BJ (cell line): ENCODE measurements at regions of chr1 and their contacts with region 1.

Region 1: DNA sequence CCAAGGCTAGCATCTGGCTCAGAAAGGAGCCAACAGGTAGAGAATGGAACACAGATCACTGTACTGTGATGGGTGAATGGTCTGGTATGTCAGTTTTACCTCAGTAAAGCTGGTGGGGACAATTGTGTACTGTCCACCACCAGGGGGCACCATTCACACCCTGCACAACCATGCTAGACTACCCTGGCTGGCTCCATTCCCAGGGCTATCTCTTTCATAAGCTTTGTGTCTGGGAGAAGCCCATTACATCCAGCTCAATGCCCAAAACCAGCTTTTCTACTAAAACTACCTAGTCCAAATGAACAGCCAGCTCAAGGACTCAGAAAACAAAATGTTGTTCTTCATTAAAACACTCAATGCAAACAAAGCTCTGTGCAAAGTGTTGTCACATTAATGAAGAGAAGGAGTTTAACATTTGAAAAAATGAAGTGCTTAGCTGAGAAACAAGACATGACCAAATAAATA is 62.0 kb upstream of the RASAL2 start:
- DNase-seq: peak; percentile 41
- H3K4me3 ChIP-seq: no peak overlapping the region
- H3K27me3 ChIP-seq: no peaks in the 10 kb centered on the region
- CTCF ChIP-seq: peak; percentile 87

Region 2: DNA sequence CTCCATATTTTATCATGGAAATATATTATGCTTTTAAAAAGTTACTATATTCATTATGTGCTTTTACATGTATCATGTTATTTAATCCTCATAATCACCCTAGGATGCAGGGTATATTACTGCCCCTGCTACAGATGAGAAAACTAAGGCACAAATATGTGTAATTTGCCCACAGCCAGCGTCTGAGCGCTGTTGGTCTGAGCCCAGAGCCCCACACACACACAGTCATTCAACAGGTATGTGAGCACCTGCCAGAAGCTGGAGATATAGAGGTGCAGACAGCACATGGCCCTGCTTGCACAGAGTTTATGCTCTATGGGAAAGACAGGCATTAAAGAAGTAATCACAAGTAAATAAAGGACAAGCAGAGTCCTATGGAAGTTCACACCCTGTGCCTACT is 12.3 kb before region 1 on chr1:
- CTCF ChIA-PET with region 1: interaction called, 11 read pairs
- POLR2A ChIA-PET with region 1: no interaction called
- DNase-seq: no peak
- H3K4me3 ChIP-seq: no peak overlapping the region
- H3K27me3 ChIP-seq: no peaks in the 10 kb centered on the region
- CTCF ChIP-seq: no peak

Region 3: DNA sequence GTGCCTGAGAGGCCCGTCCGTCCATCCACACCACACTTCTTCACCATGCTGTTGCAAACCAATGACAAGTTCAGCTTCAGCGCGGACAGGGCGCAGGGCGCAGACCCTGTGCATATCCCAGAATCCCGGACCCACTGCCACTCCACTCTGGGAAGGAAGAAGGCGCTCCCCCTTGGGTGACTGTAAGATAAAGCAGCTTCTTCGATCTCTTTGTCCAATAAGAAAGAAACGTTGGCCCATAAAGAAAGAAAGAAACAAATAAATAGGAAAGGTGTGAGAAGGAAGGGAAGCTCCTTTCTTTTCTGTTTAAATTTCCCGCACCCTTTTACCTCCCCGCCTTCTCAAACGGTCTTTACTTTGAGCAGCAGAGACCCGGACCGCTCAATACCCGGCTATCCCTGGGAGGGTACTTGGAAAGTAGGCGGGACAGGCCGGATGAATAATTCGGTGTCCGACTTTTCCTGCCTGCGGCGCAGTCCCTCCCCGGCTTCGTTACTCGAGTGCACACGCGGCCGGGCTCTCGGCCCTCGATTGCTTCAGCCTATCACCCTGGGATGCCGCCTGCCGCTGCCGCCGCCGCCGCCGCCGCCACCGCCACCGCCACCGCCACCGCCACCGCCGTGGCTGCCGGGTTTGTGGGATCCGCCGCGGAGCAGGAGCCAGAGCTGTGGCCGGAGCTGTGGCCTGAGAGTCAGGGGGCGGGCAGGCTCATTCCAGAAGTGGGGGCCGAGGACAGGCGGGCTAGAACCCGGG is 61.5 kb after region 1 on chr1:
- CTCF ChIA-PET with region 1: interaction called, 11 read pairs
- POLR2A ChIA-PET with region 1: no interaction called
- DNase-seq: peak; percentile 83
- H3K4me3 ChIP-seq: peak overlapping the region; percentile 98
- H3K27me3 ChIP-seq: no peaks in the 10 kb centered on the region
- CTCF ChIP-seq: no peak; the same call in 1 of the 2 replicates

Region 4: GRCh38 chr1:178273707-178274410 is 242.0 kb after region 1 on chr1:
- CTCF ChIA-PET with region 1: interaction called, 10 read pairs
- POLR2A ChIA-PET with region 1: no interaction called
- DNase-seq: no peak
- H3K4me3 ChIP-seq: no peak overlapping the region
- H3K27me3 ChIP-seq: no peaks in the 10 kb centered on the region
- CTCF ChIP-seq: no peak

Region 5: GRCh38 chr1:178282949-178283367 is 251.1 kb after region 1 on chr1:
- CTCF ChIA-PET with region 1: interaction called, 60 read pairs
- POLR2A ChIA-PET with region 1: no interaction called
- DNase-seq: no peak
- H3K4me3 ChIP-seq: no peak overlapping the region
- H3K27me3 ChIP-seq: no peaks in the 10 kb centered on the region
- CTCF ChIP-seq: peak; percentile 62